ENCODE measurements at regions of chr9 and their contacts with region 1.

Region 1: DNA sequence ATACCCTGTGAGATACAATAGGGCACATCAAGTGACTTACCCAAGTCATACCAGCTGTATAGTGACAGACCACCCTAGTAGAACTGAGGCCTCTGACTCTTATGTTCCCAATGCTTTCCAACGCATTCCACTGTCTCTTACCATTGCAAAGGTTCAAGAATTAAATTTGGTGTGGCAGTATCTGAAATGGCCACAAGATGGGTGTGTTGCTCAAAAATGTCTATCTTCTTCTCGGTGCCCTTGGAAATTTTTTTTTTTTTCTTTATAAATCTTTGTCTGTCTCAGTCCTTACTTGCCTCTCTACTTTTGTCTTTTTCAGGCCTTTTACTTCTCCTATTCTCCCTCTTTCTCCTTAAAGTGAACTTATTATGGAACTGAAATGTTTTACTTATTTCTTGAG is 48.4 kb downstream of the GPR21 start:
- DNase-seq: peak; percentile 13 to 41
- ATAC-seq: peak; percentile 73 to 83; a peak in 4 of 6 replicates
- H3K4me3 ChIP-seq: no peak overlapping the region
- H3K27ac ChIP-seq: no peak overlapping the region
- H3K4me1 ChIP-seq: no peaks in the 10 kb centered on the region
- CTCF ChIP-seq: peak; percentile 64
- EP300 ChIP-seq: no peak
- POLR2A ChIP-seq: no peak
- RAD21 ChIP-seq: peak; percentile 66 to 72

Region 2: DNA sequence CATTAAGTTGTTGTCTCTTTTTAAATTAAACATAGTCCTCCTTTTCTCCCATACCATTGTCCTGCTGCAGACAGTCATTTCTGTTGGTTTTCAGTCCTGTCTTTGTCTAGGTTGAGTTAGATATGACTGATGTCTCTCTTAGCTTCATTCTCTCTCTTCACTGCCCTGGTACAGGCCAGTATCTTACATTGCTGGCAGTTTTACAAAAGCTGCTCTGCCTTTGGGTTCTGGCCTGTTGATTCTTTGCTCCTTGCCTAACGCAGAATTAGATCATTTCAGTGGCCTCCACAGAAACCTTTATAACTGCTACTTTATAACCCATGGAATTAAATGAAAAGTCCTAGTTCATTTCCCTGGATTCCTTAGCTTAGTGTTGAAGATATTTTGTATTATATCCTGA is 14.7 kb before region 1 on chr9:
- CTCF ChIA-PET with region 1: interaction called, 14 read pairs
- POLR2A ChIA-PET with region 1: no interaction called
- DNase-seq: no peak
- ATAC-seq: no peak
- H3K4me3 ChIP-seq: no peak overlapping the region
- H3K27ac ChIP-seq: no peak overlapping the region
- H3K4me1 ChIP-seq: no peaks in the 10 kb centered on the region
- CTCF ChIP-seq: no peak
- EP300 ChIP-seq: no peak
- POLR2A ChIP-seq: no peak
- RAD21 ChIP-seq: no peak

Region 3: DNA sequence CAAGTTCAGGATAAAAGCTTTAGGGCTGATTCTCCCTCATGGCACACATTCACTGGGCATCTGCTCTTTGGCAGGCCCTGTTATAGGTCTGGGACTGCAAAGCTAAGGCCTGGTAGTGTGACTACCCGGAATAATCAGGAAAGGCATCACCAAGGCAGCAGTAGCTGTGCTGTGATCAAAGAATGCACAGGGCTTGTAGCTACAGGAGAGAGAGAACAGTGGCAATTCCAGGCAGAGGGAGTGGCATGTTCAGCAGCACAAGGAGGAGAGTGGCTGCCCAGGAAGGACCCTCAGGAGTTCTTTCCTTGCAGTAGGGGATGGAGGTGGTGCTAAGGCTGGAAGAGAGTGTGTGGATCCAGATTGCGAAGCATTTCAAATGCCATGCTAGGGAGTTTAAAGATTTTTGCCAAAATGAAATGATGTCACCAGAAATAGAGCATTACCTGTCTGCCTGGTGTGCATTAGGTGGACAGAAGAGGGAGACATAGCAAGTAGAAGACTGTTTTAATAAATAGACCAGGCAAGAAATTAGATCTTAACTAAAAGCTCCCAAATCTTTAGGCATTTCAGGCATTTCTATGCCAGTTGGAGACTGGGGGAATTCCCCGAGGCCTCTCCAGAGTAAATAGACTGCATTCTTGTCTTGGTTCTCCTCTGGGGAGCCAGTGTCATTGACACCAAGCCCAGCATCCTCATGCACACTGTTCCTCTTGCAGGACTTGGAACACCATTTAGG is 20.7 kb after region 1 on chr9:
- CTCF ChIA-PET with region 1: interaction called, 12 read pairs
- POLR2A ChIA-PET with region 1: no interaction called
- DNase-seq: no peak
- ATAC-seq: peak in 1 of 2 experiments; percentile 50; a peak in 3 of 6 replicates
- H3K4me3 ChIP-seq: no peak overlapping the region
- H3K27ac ChIP-seq: no peak overlapping the region
- H3K4me1 ChIP-seq: peaks cover 16% of the 10 kb centered on the region; the same call in 2 of the 3 replicates
- CTCF ChIP-seq: no peak; the same call in 2 of the 3 replicates
- EP300 ChIP-seq: no peak
- POLR2A ChIP-seq: no peak
- RAD21 ChIP-seq: peak; percentile 27 to 34; a peak in 1 of 5 replicates

Region 4: GRCh38 chr9:123187131-123187530 is 105.3 kb after region 1 on chr9:
- CTCF ChIA-PET with region 1: no interaction called
- POLR2A ChIA-PET with region 1: no interaction called
- DNase-seq: no peak
- ATAC-seq: no peak
- H3K4me3 ChIP-seq: no peak overlapping the region
- H3K27ac ChIP-seq: no peak overlapping the region
- H3K4me1 ChIP-seq: no peaks in the 10 kb centered on the region
- CTCF ChIP-seq: no peak
- EP300 ChIP-seq: no peak
- POLR2A ChIP-seq: no peak
- RAD21 ChIP-seq: no peak

Region 5: GRCh38 chr9:123338710-123339665 is 257.2 kb after region 1 on chr9:
- CTCF ChIA-PET with region 1: interaction called, 22 read pairs
- POLR2A ChIA-PET with region 1: no interaction called
- DNase-seq: no peak
- ATAC-seq: no peak; a peak in 1 of 6 replicates
- H3K4me3 ChIP-seq: no peak overlapping the region
- H3K27ac ChIP-seq: no peak overlapping the region
- H3K4me1 ChIP-seq: no peaks in the 10 kb centered on the region
- CTCF ChIP-seq: no peak
- EP300 ChIP-seq: no peak
- POLR2A ChIP-seq: no peak
- RAD21 ChIP-seq: no peak

Region 6: GRCh38 chr9:123389070-123389469 is 307.2 kb after region 1 on chr9:
- CTCF ChIA-PET with region 1: interaction called, 21 read pairs
- POLR2A ChIA-PET with region 1: no interaction called
- DNase-seq: no peak
- ATAC-seq: no peak
- H3K4me3 ChIP-seq: no peak overlapping the region
- H3K27ac ChIP-seq: no peak overlapping the region
- H3K4me1 ChIP-seq: no peaks in the 10 kb centered on the region
- CTCF ChIP-seq: no peak
- EP300 ChIP-seq: no peak
- POLR2A ChIP-seq: no peak
- RAD21 ChIP-seq: no peak